ENCODE measurements at regions of chrX and their contacts with region 1.

Region 1: DNA sequence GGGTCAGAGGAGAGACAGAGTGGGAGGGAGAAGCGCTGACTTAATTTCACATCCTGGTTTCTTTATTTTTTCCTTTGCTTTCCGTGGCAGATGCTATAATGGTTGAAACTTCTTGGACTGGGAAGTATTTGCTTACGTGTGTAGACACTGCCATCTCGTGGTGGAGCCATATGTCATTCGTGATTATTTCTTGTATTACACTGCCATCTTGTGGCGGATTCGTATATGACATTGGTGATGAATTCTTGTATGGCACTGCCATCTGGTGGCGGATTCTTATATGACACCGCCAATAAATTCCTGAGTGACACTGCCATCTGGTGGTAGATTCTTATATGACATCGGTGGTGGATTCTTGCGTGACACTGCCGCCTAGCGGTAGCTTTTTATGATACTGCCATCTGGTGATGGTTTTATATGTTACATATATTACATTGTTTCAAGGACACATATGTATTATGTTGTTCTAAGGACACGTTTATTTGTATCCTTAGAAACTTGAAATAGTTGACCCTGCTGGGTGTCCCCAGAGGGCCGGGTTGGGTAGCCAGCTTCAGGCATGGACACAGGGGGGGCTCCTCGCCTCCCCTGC is 37.3 kb upstream of the CLCN4 start:
- DNase-seq: peak; percentile 43 to 90 (median 67)
- ATAC-seq: peak; percentile 72
- H3K4me3 ChIP-seq: no peak overlapping the region
- H3K4me3 Mint-ChIP-seq: no peak overlapping the region
- H3K27ac ChIP-seq: peak overlapping the region in 1 of 2 experiments; percentile 36
- H3K27ac Mint-ChIP-seq: peak overlapping the region; percentile 34
- H3K4me1 ChIP-seq: no peaks in the 10 kb centered on the region
- H3K4me1 Mint-ChIP-seq: peaks cover 25% of the 10 kb centered on the region
- H3K27me3 ChIP-seq: no peaks in the 10 kb centered on the region
- H3K27me3 Mint-ChIP-seq: no peaks in the 10 kb centered on the region
- CTCF ChIP-seq: peak; percentile 99

Region 2: GRCh38 chrX:9341291-9342201 is 777.9 kb before region 1 on chrX:
- CTCF ChIA-PET with region 1: no interaction called
- POLR2A ChIA-PET with region 1: no interaction called
- intact Hi-C with region 1: loop called in 1 of 2 experiments (anchors 10 kb)
- DNase-seq: peak in 6 of 9 experiments; percentile 55 to 84 (median 74)
- ATAC-seq: peak; percentile 50
- H3K4me3 ChIP-seq: peak overlapping the region; percentile 35 to 46
- H3K4me3 Mint-ChIP-seq: peak overlapping the region; percentile 85
- H3K27ac ChIP-seq: peak overlapping the region; percentile 81
- H3K27ac Mint-ChIP-seq: peak overlapping the region; percentile 98
- H3K4me1 ChIP-seq: peaks cover 24% of the 10 kb centered on the region
- H3K4me1 Mint-ChIP-seq: peaks cover 37% of the 10 kb centered on the region
- H3K27me3 ChIP-seq: no peaks in the 10 kb centered on the region
- H3K27me3 Mint-ChIP-seq: no peaks in the 10 kb centered on the region
- CTCF ChIP-seq: no peak

Region 3: DNA sequence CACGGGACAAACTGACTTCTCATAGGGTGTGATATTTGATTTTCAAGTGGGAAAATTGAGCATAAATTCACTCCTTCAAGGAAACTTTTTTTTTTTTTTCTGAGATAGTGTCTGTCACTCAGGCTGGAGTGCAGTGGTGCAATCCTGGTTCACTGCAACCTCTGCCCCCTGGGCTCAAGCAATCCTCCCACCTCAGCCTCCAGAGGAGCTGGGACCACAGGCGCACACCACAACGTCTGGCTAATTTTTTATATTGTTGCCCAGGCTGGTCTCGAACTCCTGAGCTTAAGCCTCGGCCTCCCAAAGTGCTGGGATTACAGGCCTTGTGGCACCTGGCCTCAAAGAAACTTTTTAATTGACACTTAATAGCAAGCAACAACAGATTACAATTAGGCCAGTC is 138.6 kb before region 1 on chrX:
- CTCF ChIA-PET with region 1: interaction called, 10 read pairs
- POLR2A ChIA-PET with region 1: no interaction called
- intact Hi-C with region 1: no loop called
- DNase-seq: no peak
- ATAC-seq: no peak
- H3K4me3 ChIP-seq: no peak overlapping the region
- H3K4me3 Mint-ChIP-seq: no peak overlapping the region
- H3K27ac ChIP-seq: no peak overlapping the region
- H3K27ac Mint-ChIP-seq: no peak overlapping the region
- H3K4me1 ChIP-seq: no peaks in the 10 kb centered on the region
- H3K4me1 Mint-ChIP-seq: no peaks in the 10 kb centered on the region
- H3K27me3 ChIP-seq: no peaks in the 10 kb centered on the region
- H3K27me3 Mint-ChIP-seq: no peaks in the 10 kb centered on the region
- CTCF ChIP-seq: no peak

Region 4: DNA sequence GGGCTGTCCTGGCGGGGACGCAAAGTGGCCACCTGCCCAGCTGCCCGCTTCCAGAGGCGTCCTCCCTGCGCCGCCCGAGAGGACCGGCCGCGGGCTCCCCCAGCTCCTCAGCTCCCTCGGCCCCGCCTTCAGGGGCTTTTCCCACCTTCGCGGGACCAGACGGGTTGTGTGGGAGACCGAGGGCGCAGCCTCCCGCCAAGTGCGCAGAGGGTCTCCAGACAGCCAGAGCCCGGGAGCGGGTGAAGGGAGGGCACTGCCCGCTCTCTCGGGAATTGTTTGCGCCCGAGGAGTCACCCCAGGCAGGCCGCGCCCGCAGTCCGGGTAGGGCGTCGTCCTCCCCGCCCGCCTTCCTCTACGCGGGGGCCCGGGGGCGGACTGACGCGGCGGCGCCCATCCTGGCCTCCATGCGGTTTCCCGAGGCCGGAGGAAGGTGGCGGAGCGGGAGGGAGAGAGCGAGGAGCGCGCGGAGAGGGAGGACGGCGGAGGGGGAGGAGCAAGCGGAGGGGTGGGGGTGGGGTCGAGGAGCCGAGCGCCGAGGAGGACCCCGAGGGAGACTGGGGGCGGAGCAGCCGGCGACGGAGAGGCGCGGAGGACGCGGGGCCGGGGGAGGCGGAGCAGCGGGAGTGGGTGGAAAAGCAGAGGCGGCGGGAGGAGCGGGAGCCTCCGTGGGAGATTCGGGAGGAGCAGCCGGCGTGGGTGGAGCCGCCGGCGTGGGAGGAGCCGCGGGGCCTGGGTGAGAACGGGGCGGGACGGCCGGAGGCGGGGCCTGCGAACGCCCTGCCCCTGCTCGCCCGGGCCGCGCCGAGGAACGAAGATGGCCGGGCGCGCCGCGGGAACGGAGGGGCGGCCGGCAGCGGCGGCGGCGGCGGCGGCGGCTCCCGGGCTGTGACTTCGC is 104.8 kb before region 1 on chrX:
- CTCF ChIA-PET with region 1: interaction called, 9 read pairs
- POLR2A ChIA-PET with region 1: no interaction called
- intact Hi-C with region 1: loop called in 1 of 2 experiments (anchors 1 kb)
- DNase-seq: peak; percentile 49 to 88 (median 73)
- ATAC-seq: peak; percentile 92
- H3K4me3 ChIP-seq: peak overlapping the region; percentile 49 to 61
- H3K4me3 Mint-ChIP-seq: peak overlapping the region; percentile 71
- H3K27ac ChIP-seq: peak overlapping the region in 1 of 2 experiments; percentile 39
- H3K27ac Mint-ChIP-seq: no peak overlapping the region
- H3K4me1 ChIP-seq: peaks cover 13% of the 10 kb centered on the region
- H3K4me1 Mint-ChIP-seq: peaks cover 34% of the 10 kb centered on the region
- H3K27me3 ChIP-seq: no peaks in the 10 kb centered on the region
- H3K27me3 Mint-ChIP-seq: no peaks in the 10 kb centered on the region
- CTCF ChIP-seq: no peak

Region 5: DNA sequence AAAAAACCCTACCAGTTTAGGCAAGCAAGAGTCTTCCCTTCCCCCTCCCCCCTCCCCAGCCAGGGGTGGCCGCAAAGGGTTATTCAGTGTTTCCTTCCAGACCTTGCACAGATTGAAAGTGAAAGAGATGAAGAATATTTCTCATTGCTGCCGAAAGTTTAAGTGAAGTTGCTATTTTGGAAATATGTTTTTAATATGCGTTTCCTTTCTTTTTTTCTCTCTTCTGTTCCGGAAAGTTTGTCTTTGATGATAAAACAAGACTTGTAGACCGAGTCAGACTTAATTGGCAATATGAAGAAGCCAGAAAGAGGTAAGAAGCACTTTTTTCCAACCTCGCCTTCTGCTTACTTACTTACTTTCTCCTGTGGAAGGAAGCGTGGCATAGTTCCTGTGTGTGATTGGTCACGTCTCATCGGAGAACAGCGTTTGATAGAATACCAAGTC is 21.2 kb before region 1 on chrX:
- CTCF ChIA-PET with region 1: interaction called, 18 read pairs
- POLR2A ChIA-PET with region 1: no interaction called
- intact Hi-C with region 1: loop called in 1 of 2 experiments (anchors 2 kb)
- DNase-seq: peak in 7 of 9 experiments; percentile 29 to 77 (median 55)
- ATAC-seq: peak; percentile 86
- H3K4me3 ChIP-seq: peak overlapping the region; percentile 61 to 76
- H3K4me3 Mint-ChIP-seq: peak overlapping the region; percentile 94
- H3K27ac ChIP-seq: peak overlapping the region; percentile 78 to 83
- H3K27ac Mint-ChIP-seq: peak overlapping the region; percentile 97
- H3K4me1 ChIP-seq: peaks cover 18% of the 10 kb centered on the region
- H3K4me1 Mint-ChIP-seq: peaks cover 55% of the 10 kb centered on the region
- H3K27me3 ChIP-seq: no peaks in the 10 kb centered on the region
- H3K27me3 Mint-ChIP-seq: no peaks in the 10 kb centered on the region
- CTCF ChIP-seq: no peak